Transverse colon (tissue), 4 donors: ENCODE measurements at regions of chr13 and their contacts with region 1.

Region 1: DNA sequence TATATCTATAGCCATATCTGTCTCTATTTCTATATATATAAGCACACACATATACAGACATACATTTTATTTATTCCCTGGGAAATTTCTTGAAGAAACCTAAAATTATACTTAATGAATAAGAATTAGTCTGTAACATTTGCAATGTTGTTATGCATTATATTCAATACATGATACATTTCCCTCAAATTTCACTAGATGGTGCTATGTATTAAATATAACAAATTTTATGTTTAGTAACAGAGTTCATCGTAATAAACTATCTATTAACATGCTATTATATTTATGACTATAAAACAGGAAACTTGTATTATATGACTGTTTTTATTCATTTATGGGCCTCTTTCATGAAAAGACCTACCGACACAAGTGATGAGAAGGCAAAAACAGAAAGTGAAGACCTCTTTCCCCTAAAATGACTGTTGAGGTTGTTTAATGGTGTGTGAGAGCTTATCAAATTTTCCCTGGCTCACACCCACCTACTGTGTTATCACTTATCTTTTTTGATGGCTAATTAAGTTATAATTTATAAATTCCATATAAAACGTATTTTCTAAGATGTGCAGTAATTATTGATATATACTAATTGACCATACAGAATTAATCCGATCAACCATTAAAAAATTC is 881.9 kb downstream of the SLITRK6 start:
- DNase-seq: no peak
- H3K4me3 ChIP-seq: peak overlapping the region in 1 of 4 donors; percentile 2
- H3K27ac ChIP-seq: no peak overlapping the region
- H3K4me1 ChIP-seq: no peaks in the 10 kb centered on the region
- H3K27me3 ChIP-seq: no peaks in the 10 kb centered on the region
- CTCF ChIP-seq: peak; percentile 27 to 47 (median 34)
- EP300 ChIP-seq: no peak
- POLR2A ChIP-seq: no peak

Region 2: GRCh38 chr13:85806553-85807175 is 889.3 kb after region 1 on chr13:
- in situ Hi-C with region 1: loop called in 3 of 4 experiments (anchors 5 to 10 kb)
- intact Hi-C with region 1: loop called (anchors 10 kb)
- DNase-seq: no peak
- H3K4me3 ChIP-seq: no peak overlapping the region
- H3K27ac ChIP-seq: no peak overlapping the region
- H3K4me1 ChIP-seq: peaks cover 0 to 2% (median 0%) of the 10 kb centered on the region in 4 donors
- H3K27me3 ChIP-seq: no peaks in the 10 kb centered on the region
- CTCF ChIP-seq: peak; percentile 59 to 73 (median 61)
- EP300 ChIP-seq: no peak
- POLR2A ChIP-seq: no peak

Region 3: DNA sequence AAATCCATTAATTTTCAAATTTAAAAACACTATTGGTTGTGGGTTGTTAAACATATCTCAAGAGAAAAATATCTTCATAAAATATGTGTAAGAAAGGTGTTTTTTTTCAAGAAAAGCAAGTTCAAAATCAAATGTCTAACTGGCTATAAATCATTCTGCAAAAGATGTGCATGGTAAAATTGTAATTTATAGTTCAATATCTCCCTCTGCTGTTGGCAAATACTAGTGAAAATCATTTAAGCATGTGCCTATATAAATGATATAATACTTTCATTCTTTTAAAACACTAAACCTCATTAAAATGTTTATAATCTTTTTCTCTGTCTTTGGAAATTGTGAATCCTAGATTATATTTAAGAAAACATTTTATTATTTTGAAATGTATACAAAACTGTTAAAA is 899.0 kb after region 1 on chr13:
- in situ Hi-C with region 1: loop called in 1 of 4 experiments (anchors 5 kb)
- intact Hi-C with region 1: no loop called
- DNase-seq: no peak
- H3K4me3 ChIP-seq: no peak overlapping the region
- H3K27ac ChIP-seq: no peak overlapping the region
- H3K4me1 ChIP-seq: no peaks in the 10 kb centered on the region
- H3K27me3 ChIP-seq: no peaks in the 10 kb centered on the region
- CTCF ChIP-seq: no peak
- EP300 ChIP-seq: no peak
- POLR2A ChIP-seq: no peak